ENCODE measurements at regions of chr5 and their contacts with region 1.

Region 1: DNA sequence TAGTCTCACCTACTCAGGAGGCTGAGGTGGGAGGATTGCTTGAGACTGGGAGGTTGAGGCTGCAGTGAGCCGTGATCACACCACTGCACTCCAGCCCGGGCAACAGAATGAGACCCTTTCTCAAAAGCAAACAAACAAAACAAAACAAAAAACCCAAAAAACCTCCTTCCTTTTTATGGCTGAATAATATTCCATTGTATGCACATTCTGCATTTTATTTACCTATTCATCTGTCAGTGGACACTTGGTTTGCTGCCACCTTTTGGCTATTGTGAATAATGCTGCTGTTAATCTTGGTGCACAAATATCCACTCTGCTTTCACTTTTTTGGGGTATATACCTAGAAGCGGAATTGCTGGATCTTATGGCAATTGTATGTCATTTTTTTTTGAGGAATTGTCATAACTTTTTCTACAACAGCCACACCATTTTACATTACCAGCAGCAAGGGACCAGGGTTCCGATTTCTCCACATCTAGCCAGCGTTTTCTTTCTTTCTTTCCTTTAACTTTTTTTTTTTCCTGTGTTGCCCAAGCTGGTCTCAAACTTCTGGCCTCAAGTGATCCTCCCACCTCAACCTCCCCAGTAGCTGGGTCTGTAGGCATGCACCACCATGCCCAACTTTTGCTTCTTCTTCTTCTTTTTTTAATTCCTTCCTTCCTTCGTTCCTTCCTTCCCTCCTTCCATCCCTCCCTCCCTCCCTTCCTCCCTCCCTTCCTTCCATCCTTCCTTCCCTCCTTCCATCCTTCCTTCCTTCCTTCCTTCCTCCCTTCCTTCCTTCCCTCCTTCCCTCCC is 30.6 kb downstream of the NKX2-5 start:
- DNase-seq: no peak
- ATAC-seq: peak in 3 of 4 donors; percentile 37 to 42 (median 41)
- H3K4me3 ChIP-seq: no peak overlapping the region
- H3K27ac ChIP-seq: no peak overlapping the region
- H3K4me1 ChIP-seq: no peaks in the 10 kb centered on the region
- H3K27me3 ChIP-seq: peaks cover 0 to 7% (median 0%) of the 10 kb centered on the region in 4 donors
- CTCF ChIP-seq: peak in 3 of 4 donors; percentile 26 to 40 (median 31)

Region 2: GRCh38 chr5:172648008-172648359 is 556.4 kb before region 1 on chr5:
- intact Hi-C with region 1: no loop called
- DNase-seq: no peak
- ATAC-seq: peak in 3 of 4 donors; percentile 17 to 57 (median 29)
- H3K4me3 ChIP-seq: no peak overlapping the region
- H3K27ac ChIP-seq: no peak overlapping the region
- H3K4me1 ChIP-seq: no peaks in the 10 kb centered on the region
- H3K27me3 ChIP-seq: no peaks in the 10 kb centered on the region
- CTCF ChIP-seq: no peak

Region 3: DNA sequence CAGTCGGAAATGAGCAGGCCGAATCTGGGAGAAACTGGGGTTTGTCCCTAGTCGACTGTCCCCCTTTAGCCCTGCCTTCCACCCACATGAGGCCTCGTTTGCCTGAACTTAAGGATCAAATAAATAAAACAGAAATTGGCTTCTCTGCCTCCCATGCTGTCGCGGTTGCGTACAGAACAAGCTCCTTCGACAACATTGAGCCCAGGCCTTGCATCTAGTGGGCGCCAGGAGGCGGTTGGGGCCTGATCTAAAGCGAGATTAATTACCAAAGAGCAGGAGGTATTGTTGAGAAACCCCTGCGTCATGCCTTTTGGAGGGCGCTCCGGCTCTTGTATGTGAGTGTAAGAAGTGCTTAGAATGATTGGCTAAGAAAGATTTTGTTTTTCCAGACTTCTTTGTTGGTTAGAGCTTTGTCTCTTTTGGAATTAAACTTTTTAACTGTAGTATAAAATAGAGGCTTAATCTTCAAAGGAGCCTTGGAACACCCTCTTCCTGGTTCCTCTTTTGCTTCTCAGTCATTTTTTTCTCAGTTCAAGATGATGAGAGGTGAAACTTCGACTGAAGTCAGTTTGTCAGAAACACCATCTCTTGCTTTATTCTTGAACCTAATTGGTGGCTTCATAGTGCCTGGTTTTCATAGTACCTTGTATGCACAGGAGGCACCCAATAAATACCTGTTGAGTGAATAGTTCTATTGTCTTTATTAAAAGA is 220.0 kb before region 1 on chr5:
- intact Hi-C with region 1: loop called in 1 of 3 experiments (anchors 10 kb)
- DNase-seq: peak; percentile 44 to 70 (median 56)
- ATAC-seq: peak; percentile 55 to 80 (median 64)
- H3K4me3 ChIP-seq: peak overlapping the region; percentile 31 to 88 (median 74)
- H3K27ac ChIP-seq: peak overlapping the region; percentile 77 to 93 (median 88)
- H3K4me1 ChIP-seq: peaks cover 0 to 13% (median 11%) of the 10 kb centered on the region in 3 donors
- H3K27me3 ChIP-seq: no peaks in the 10 kb centered on the region
- CTCF ChIP-seq: peak in 1 of 4 donors; percentile 7

Region 4: GRCh38 chr5:173265433-173265832 is 61.1 kb after region 1 on chr5:
- intact Hi-C with region 1: no loop called
- DNase-seq: no peak
- ATAC-seq: no peak
- H3K4me3 ChIP-seq: no peak overlapping the region
- H3K27ac ChIP-seq: no peak overlapping the region
- H3K4me1 ChIP-seq: no peaks in the 10 kb centered on the region
- H3K27me3 ChIP-seq: peaks cover 0 to 4% (median 0%) of the 10 kb centered on the region in 4 donors
- CTCF ChIP-seq: no peak